Posterior vena cava (tissue), 2 donors: ENCODE measurements at regions of chr13 and their contacts with region 1.

Region 1: GRCh38 chr13:44484562-44485138 is 91.5 kb downstream of the TSC22D1 start:
- DNase-seq: no peak

Region 2: GRCh38 chr13:44577236-44578066 is 92.8 kb after region 1 on chr13:
- intact Hi-C with region 1: loop called in 1 of 2 experiments (anchors 10 kb)
- DNase-seq: peak; percentile 99

Region 3: DNA sequence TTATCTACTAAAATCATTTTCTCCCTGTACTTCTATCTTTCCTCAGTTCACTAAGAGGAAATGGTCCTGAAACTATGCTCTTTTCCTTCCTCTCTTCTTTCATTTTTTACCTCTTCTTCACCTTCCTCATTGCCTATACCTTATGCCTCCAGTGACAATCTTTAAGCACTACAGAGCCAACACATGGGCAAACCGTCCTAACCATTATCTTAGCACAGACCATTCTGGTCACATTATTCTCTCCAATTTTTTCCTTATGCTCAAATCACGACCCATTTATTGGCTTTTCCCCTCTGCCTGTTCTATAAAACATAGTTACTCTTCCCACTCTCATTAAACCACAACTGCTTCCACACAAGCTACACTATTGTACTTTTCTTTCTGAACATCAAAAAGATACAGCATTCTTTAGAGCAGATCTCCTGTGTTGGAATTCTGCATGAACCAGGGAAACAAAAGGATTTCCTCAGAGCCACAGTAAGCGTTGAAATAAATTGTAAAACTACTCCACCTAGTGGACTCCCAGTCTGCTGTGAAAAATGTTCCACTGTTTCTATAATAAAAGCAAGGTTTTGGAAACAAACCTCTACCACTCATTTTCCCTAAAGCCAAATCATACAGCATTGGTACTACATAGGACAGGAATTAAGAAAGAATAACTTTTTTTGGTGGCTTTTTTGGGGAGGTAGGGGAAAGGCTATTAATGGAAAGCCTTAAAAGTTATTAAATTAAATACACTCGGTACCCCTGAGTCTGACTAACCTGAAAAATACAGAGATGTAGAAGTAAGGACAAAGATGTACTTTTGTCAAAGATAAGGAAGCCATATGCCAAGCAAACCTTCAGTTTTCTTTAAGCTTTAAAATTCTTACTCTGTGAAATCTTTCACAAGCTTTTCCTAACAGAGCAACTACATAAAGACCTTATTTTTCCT is 485.2 kb after region 1 on chr13:
- intact Hi-C with region 1: loop called (anchors 10 kb)
- DNase-seq: no peak

Region 4: DNA sequence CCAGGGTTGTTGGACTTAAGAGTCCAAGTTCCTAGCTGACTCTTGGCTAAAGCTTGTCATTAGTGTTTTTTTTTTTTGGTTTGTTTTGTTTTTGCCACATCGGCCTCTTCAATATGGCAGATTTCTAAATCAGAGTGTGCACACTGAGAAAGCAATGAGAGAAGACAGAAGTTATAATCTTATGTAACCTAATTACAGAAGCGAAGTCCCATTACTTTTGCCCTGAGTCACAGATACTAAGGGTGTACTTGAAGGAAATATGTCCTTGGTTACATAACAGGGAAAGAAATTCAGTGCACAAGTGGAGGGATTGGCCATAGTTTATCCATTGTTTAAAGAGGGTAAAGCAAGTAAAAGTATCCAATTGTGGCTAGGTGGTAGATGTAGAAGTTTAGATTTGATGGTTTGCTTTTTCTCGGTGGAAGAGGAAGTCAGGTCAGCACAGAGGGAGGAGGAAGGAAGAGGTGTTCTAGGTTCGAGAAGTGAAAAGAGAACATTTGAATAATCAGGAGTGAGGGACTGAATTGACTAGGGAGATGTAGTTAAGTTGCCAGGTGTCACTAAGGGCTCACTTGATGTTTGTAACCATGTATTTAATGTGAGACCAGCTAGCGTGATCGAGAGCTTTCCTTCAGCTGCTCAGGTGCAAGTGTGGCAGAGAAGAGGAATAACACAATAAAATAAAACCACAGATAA is 647.9 kb after region 1 on chr13:
- intact Hi-C with region 1: no loop called
- DNase-seq: no peak